ENCODE measurements at regions of chr3 and their contacts with region 1.

Region 1: GRCh38 chr3:41247055-41248004 is 48.0 kb downstream of the CTNNB1 start:
- DNase-seq: peak; percentile 95
- ATAC-seq: peak; percentile 68
- H3K4me3 ChIP-seq: no peak overlapping the region; a peak in 1 of 6 replicates
- H3K27ac ChIP-seq: peak overlapping the region; percentile 48
- H3K4me1 ChIP-seq: peaks cover 53% of the 10 kb centered on the region
- H3K27me3 ChIP-seq: no peaks in the 10 kb centered on the region
- CTCF ChIP-seq: no peak
- EP300 ChIP-seq: peak in 1 of 2 experiments; percentile 90; a peak in 3 of 4 replicates
- POLR2A ChIP-seq: no peak
- RAD21 ChIP-seq: no peak

Region 2: GRCh38 chr3:40580494-40581091 is 666.7 kb before region 1 on chr3:
- CTCF ChIA-PET with region 1: no interaction called
- POLR2A ChIA-PET with region 1: no interaction called
- in situ Hi-C with region 1: no loop called
- intact Hi-C with region 1: loop called (anchors 10 kb)
- DNase-seq: peak; percentile 50
- ATAC-seq: peak; percentile 81
- H3K4me3 ChIP-seq: no peak overlapping the region
- H3K27ac ChIP-seq: no peak overlapping the region
- H3K4me1 ChIP-seq: peaks cover 9% of the 10 kb centered on the region; the same call in 1 of the 2 replicates
- H3K27me3 ChIP-seq: peaks cover 2 to 4% of the 10 kb centered on the region in 2 experiments; a peak in 2 of 5 replicates
- CTCF ChIP-seq: peak; percentile 95
- EP300 ChIP-seq: no peak
- POLR2A ChIP-seq: no peak
- RAD21 ChIP-seq: peak; percentile 81

Region 3: GRCh38 chr3:41267975-41268663 is 20.8 kb after region 1 on chr3:
- CTCF ChIA-PET with region 1: no interaction called
- POLR2A ChIA-PET with region 1: interaction called, 4 read pairs
- in situ Hi-C with region 1: no loop called
- intact Hi-C with region 1: loop called (anchors 1 kb)
- DNase-seq: peak; percentile 96
- ATAC-seq: peak; percentile 89
- H3K4me3 ChIP-seq: no peak overlapping the region
- H3K27ac ChIP-seq: peak overlapping the region; percentile 74
- H3K4me1 ChIP-seq: peaks cover 67% of the 10 kb centered on the region
- H3K27me3 ChIP-seq: no peaks in the 10 kb centered on the region
- CTCF ChIP-seq: no peak
- EP300 ChIP-seq: peak; percentile 83 to 97
- POLR2A ChIP-seq: no peak
- RAD21 ChIP-seq: no peak

Region 4: GRCh38 chr3:41274944-41275668 is 27.8 kb after region 1 on chr3:
- CTCF ChIA-PET with region 1: no interaction called
- POLR2A ChIA-PET with region 1: interaction called, 9 read pairs
- in situ Hi-C with region 1: no loop called
- intact Hi-C with region 1: loop called (anchors 2 kb)
- DNase-seq: peak; percentile 88
- ATAC-seq: peak; percentile 93
- H3K4me3 ChIP-seq: peak overlapping the region; percentile 15 to 59 (median 40); a peak in 3 of 6 replicates
- H3K27ac ChIP-seq: peak overlapping the region; percentile 81
- H3K4me1 ChIP-seq: peaks cover 65% of the 10 kb centered on the region
- H3K27me3 ChIP-seq: no peaks in the 10 kb centered on the region
- CTCF ChIP-seq: no peak
- EP300 ChIP-seq: peak in 1 of 2 experiments; percentile 65; a peak in 2 of 4 replicates
- POLR2A ChIP-seq: no peak
- RAD21 ChIP-seq: no peak

Region 5: GRCh38 chr3:41290736-41291135 is 43.4 kb after region 1 on chr3:
- CTCF ChIA-PET with region 1: no interaction called
- POLR2A ChIA-PET with region 1: no interaction called
- in situ Hi-C with region 1: no loop called
- intact Hi-C with region 1: no loop called
- DNase-seq: no peak
- ATAC-seq: peak; percentile 18; the same call in 1 of the 3 replicates
- H3K4me3 ChIP-seq: no peak overlapping the region
- H3K27ac ChIP-seq: peak overlapping the region; percentile 47
- H3K4me1 ChIP-seq: peaks cover 68% of the 10 kb centered on the region
- H3K27me3 ChIP-seq: no peaks in the 10 kb centered on the region
- CTCF ChIP-seq: no peak
- EP300 ChIP-seq: no peak
- POLR2A ChIP-seq: no peak
- RAD21 ChIP-seq: no peak

Region 6: GRCh38 chr3:41450416-41451231 is 203.3 kb after region 1 on chr3:
- CTCF ChIA-PET with region 1: no interaction called
- POLR2A ChIA-PET with region 1: no interaction called
- in situ Hi-C with region 1: no loop called
- intact Hi-C with region 1: loop called (anchors 10 kb)
- DNase-seq: no peak
- ATAC-seq: peak; percentile 66
- H3K4me3 ChIP-seq: no peak overlapping the region
- H3K27ac ChIP-seq: no peak overlapping the region
- H3K4me1 ChIP-seq: no peaks in the 10 kb centered on the region
- H3K27me3 ChIP-seq: no peaks in the 10 kb centered on the region
- CTCF ChIP-seq: no peak
- EP300 ChIP-seq: no peak
- POLR2A ChIP-seq: no peak
- RAD21 ChIP-seq: no peak

Measured in HepG2 (cell line).